Heart left ventricle (tissue), 16 donors: ENCODE measurements at regions of chr9 and their contacts with region 1.

Region 1: DNA sequence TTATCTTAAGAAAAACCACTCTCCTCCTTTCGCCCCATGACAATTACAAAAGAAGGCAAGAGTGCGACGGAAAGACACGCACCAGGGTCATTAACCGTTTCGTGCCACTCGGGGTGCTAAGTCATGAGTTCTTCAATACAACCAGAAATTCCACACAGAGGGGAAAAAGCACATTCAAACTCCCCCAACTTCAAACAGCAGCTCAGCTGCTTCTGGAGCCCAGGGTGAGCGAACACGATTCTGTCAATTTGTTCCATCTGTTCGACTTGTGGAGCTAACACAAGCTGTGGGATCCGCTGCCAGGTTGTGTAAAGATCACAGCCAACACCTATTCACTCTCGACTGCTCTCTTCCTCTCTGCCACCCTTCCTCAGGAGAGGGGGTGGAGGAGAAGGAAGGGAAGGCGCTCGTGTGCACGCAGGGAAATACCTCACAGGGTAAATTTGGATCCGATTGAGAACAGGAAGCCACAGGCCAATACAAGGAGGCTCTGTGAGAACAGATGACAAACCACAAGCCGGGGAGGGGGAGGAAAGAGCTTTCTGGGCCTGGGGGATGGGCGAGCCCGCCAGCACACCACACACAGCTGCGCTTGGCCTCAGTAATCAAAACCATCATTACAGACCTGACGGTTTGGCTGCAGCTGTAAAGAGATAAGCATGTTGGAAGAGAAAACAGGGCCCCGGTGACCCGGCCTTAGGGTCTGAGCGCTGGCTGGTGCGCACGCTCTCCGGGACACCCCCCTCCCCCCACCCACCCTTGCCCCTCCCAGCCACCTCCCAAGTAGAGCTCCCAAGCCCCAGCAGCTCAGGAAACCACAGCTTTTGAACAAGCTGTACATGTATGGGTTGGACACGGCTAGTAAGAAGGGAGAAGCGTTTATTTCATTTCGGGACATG is 54.3 kb downstream of the PTCH1 start:
- DNase-seq: peak; percentile 62 to 77 (median 75)
- ATAC-seq: peak; percentile 81 to 97 (median 90)
- H3K4me3 ChIP-seq: peak overlapping the region in 11 of 12 donors; percentile 18 to 55 (median 44)
- H3K27ac ChIP-seq: peak overlapping the region in 11 of 12 donors; percentile 29 to 71 (median 57)
- H3K4me1 ChIP-seq: peaks cover 0 to 24% (median 16%) of the 10 kb centered on the region in 12 donors
- H3K27me3 ChIP-seq: peaks cover 0 to 4% (median 0%) of the 10 kb centered on the region in 9 donors
- CTCF ChIP-seq: no peak
- POLR2A ChIP-seq: no peak

Region 2: DNA sequence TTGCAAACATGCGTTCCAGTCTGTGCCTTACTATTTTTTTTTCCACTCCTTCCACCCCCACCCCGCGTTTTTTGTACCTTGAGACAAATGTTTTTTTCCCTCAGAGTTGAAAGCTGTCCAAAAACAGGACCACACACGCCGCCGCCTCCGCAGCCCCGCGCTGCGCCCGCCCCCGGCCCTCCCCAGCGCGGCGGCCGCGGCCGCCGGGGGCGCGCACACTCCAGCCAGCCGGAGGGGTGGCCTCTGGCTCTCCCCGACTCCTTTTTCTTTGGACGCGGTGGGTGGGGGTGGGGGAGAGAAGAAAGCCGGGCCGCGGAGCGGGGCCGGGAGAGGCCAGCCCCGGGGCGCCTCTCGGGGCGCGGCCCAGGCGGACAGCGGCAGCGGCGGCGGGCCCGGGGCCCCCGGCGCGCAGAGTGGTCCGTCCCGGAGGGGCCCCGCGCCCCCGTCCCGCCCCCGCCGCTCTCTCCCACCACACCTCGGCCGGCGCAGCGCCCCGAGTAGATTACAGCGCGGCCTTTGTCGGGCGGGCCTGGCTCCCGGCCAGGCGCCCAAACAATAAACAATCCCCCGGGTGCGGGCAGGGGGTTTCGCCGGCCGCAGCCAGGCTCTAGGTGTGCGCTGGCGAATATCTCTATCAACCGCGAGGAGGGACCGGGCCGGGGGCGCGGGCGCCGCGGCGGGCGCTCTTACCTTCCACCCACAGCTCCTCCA is 43.4 kb after region 1 on chr9:
- intact Hi-C with region 1: loop called in 3 of 10 experiments (anchors 2 to 10 kb)
- DNase-seq: peak; percentile 56 to 78 (median 65)
- ATAC-seq: peak in 2 of 4 donors; percentile 17 to 19
- H3K4me3 ChIP-seq: peak overlapping the region; percentile 66 to 96 (median 76)
- H3K27ac ChIP-seq: peak overlapping the region; percentile 88 to 99 (median 92)
- H3K4me1 ChIP-seq: peaks cover 0 to 45% (median 17%) of the 10 kb centered on the region in 12 donors
- H3K27me3 ChIP-seq: peaks cover 0 to 42% (median 0%) of the 10 kb centered on the region in 9 donors
- CTCF ChIP-seq: no peak
- POLR2A ChIP-seq: peak in 1 of 2 donors; percentile 40

Region 3: GRCh38 chr9:95611354-95611753 is 148.9 kb after region 1 on chr9:
- intact Hi-C with region 1: no loop called
- DNase-seq: no peak
- ATAC-seq: no peak
- H3K4me3 ChIP-seq: no peak overlapping the region
- H3K27ac ChIP-seq: no peak overlapping the region
- H3K4me1 ChIP-seq: no peaks in the 10 kb centered on the region
- H3K27me3 ChIP-seq: peaks cover 0 to 3% (median 0%) of the 10 kb centered on the region in 9 donors
- CTCF ChIP-seq: no peak
- POLR2A ChIP-seq: no peak